ENCODE measurements at regions of chr3 and their contacts with region 1.

Region 1: DNA sequence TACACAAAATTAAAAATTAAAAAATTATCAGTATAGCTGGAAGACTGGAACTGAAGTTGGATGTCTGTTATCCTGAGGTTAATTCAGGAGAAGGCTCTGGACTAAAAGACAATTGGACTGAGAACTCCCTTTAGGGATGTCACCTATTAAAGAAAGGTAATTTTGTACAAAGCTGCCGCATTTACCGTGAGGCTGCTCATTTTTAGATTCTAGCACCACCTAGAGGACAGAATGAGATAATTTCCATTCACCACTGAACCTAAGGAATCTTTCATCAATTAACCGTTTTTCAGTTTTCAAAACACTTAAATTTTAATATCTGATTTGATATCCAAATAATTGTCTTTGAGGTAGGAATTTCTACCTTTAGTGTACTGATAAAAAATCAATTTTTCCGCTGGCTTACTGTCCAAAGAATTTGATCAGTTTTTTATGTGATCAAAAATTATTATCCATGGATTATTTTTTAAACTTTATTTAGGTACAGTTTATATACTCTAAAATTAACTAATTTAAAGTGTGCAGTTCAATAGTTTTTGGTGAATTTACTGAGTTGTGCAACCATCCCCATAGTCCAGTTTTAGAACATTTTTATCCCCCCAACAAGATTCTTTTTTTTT is 106.7 kb upstream of the TNIK start:
- DNase-seq: peak in 2 of 5 donors; percentile 48 to 51
- H3K4me3 ChIP-seq: no peak overlapping the region
- H3K4me3 Mint-ChIP-seq: no peak overlapping the region
- H3K27ac ChIP-seq: no peak overlapping the region
- H3K27ac Mint-ChIP-seq: no peak overlapping the region
- H3K4me1 ChIP-seq: no peaks in the 10 kb centered on the region
- H3K4me1 Mint-ChIP-seq: peaks cover 6 to 7% (median 7%) of the 10 kb centered on the region in 3 donors
- H3K27me3 ChIP-seq: no peaks in the 10 kb centered on the region
- H3K27me3 Mint-ChIP-seq: peaks cover 4 to 11% of the 10 kb centered on the region in 2 donors

Region 2: DNA sequence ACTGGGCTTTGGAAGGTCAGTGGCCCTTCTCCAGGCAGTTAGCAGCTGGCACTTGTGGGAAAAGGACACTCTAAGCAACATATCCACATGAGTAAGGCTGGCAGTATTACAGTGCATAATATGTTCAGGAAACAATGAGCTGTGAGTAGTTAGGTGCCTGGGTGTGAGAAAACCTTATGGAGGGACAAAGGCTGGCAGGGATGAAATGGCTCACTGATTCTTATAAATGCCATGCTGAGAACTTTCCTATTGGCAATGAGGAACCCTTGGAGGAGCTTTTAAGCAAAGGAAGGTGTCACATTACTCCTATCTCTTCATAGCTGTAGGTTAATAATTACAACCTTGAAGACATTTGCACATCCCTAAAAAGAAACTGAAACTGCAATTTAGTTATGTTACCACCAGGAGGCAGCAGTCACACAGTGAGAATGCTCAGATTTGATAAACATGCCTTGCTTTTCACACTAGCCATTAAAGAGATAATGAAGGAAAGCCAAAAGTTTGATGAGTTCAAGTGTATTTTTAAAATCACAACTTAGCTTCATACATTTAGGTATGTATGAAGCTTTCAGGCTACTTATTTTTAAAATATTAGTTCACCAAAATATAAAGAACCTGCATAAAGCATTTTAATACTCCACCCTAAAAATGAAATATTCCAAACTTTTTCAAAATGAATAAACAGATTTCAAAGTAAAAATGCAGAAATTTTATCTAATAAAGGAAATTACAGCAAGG is 403.8 kb before region 1 on chr3:
- CTCF ChIA-PET with region 1: interaction called, 12 read pairs
- POLR2A ChIA-PET with region 1: no interaction called
- DNase-seq: peak in 2 of 5 donors; percentile 18 to 35
- H3K4me3 ChIP-seq: no peak overlapping the region
- H3K4me3 Mint-ChIP-seq: no peak overlapping the region
- H3K27ac ChIP-seq: no peak overlapping the region
- H3K27ac Mint-ChIP-seq: peak overlapping the region in 2 of 8 donors; percentile 39 to 53
- H3K4me1 ChIP-seq: no peaks in the 10 kb centered on the region
- H3K4me1 Mint-ChIP-seq: peaks cover 20 to 38% (median 28%) of the 10 kb centered on the region in 3 donors
- H3K27me3 ChIP-seq: no peaks in the 10 kb centered on the region
- H3K27me3 Mint-ChIP-seq: no peaks in the 10 kb centered on the region

Region 3: GRCh38 chr3:171187706-171188290 is 379.1 kb before region 1 on chr3:
- CTCF ChIA-PET with region 1: interaction called, 28 read pairs
- POLR2A ChIA-PET with region 1: interaction called, 3 read pairs
- DNase-seq: peak in 1 of 5 donors; percentile 30
- H3K4me3 ChIP-seq: no peak overlapping the region
- H3K4me3 Mint-ChIP-seq: no peak overlapping the region
- H3K27ac ChIP-seq: no peak overlapping the region
- H3K27ac Mint-ChIP-seq: peak overlapping the region in 2 of 8 donors; percentile 17 to 47
- H3K4me1 ChIP-seq: no peaks in the 10 kb centered on the region
- H3K4me1 Mint-ChIP-seq: peaks cover 12 to 37% (median 36%) of the 10 kb centered on the region in 3 donors
- H3K27me3 ChIP-seq: no peaks in the 10 kb centered on the region
- H3K27me3 Mint-ChIP-seq: no peaks in the 10 kb centered on the region